Naive thymus-derived CD4-positive, alpha-beta T cell (primary cell): ENCODE measurements at regions of chr3 and their contacts with region 1.

Region 1: DNA sequence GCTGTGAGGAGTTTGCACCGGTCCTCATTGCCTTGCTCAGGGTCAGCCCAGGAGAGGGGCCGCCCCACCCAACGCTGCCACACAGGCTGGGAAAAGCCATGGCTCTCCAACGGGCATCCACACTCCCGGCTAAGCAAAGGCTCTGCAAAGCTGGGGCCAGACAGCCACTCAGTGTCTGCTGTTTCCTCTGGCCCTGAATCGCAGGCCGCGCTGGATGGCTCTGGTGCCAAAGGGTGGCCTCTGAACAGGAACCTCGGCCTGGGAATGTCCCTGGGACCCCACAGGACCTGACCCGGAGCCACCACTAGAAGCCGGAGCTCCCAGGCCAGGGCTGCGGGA is 42.9 kb downstream of the RPN1 start:
- DNase-seq: no peak
- ATAC-seq: no peak
- H3K4me3 ChIP-seq: peak overlapping the region; percentile 64
- H3K4me3 Mint-ChIP-seq: peak overlapping the region in 4 of 10 donors; percentile 9 to 54 (median 43)
- H3K27ac ChIP-seq: no peak overlapping the region
- H3K27ac Mint-ChIP-seq: no peak overlapping the region
- H3K4me1 ChIP-seq: peaks cover 0 to 3% of the 10 kb centered on the region in 2 donors
- H3K4me1 Mint-ChIP-seq: peaks cover 0 to 5% (median 0%) of the 10 kb centered on the region in 7 donors
- H3K27me3 ChIP-seq: no peaks in the 10 kb centered on the region
- H3K27me3 Mint-ChIP-seq: peaks cover 0 to 17% (median 5%) of the 10 kb centered on the region in 5 donors

Region 2: GRCh38 chr3:127690823-127691452 is 916.7 kb before region 1 on chr3:
- CTCF ChIA-PET with region 1: no interaction called
- POLR2A ChIA-PET with region 1: no interaction called
- intact Hi-C with region 1: no loop called
- DNase-seq: no peak
- ATAC-seq: peak; percentile 65
- H3K4me3 ChIP-seq: no peak overlapping the region
- H3K4me3 Mint-ChIP-seq: no peak overlapping the region
- H3K27ac ChIP-seq: no peak overlapping the region
- H3K27ac Mint-ChIP-seq: no peak overlapping the region
- H3K4me1 ChIP-seq: no peaks in the 10 kb centered on the region
- H3K4me1 Mint-ChIP-seq: peaks cover 0 to 2% (median 0%) of the 10 kb centered on the region in 7 donors
- H3K27me3 ChIP-seq: no peaks in the 10 kb centered on the region
- H3K27me3 Mint-ChIP-seq: no peaks in the 10 kb centered on the region

Region 3: DNA sequence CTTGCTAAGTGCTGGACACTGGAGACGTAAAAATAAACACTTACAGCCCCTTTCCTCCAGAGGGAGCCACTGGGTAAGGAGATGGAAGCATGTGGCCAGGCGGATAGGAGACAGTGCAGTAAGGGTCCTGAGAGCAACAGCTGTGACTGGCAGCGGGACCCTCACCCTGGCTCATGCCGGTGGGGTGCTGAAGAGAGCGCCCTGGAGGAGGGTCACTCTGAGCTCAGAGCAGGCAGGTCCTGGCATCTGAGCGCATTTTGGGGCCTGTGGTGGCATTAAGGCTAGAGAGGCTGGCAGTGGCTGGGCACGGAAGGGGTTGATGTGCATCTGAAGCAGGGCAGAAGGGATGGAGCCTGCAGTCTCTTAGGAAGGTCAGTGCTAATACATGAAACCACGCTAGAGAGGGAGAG is 539.5 kb before region 1 on chr3:
- CTCF ChIA-PET with region 1: no interaction called
- POLR2A ChIA-PET with region 1: no interaction called
- intact Hi-C with region 1: loop called in 1 of 2 experiments (anchors 1 kb)
- DNase-seq: peak in 7 of 9 donors; percentile 16 to 48 (median 40)
- ATAC-seq: peak; percentile 74
- H3K4me3 ChIP-seq: no peak overlapping the region
- H3K4me3 Mint-ChIP-seq: no peak overlapping the region
- H3K27ac ChIP-seq: no peak overlapping the region
- H3K27ac Mint-ChIP-seq: peak overlapping the region in 6 of 9 donors; percentile 19 to 82 (median 60)
- H3K4me1 ChIP-seq: no peaks in the 10 kb centered on the region
- H3K4me1 Mint-ChIP-seq: peaks cover 0 to 5% (median 0%) of the 10 kb centered on the region in 7 donors
- H3K27me3 ChIP-seq: no peaks in the 10 kb centered on the region
- H3K27me3 Mint-ChIP-seq: no peaks in the 10 kb centered on the region

Region 4: DNA sequence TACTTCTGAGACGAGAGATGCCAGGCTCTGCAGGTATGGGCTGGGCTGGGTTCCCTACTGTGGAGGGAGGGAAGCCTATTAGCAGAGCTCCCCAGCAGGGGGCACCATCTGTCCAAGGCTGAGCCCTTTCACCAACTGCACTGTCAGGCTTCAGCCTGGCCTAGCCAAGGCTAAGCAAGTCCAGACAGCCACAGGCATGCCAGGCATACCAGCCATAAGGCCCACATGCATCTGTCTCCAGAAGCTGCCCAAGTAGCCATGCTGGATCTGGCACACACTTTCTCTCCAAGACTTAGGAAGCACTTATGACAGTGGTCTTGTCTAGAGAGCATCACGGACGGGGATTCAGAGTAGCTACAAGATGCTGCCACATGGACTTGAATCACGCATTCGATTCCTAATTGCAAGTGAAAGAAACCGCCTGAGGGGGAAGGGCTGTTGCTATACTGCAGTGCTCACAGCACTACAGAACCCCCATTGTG is 512.4 kb before region 1 on chr3:
- CTCF ChIA-PET with region 1: interaction called, 6 read pairs
- POLR2A ChIA-PET with region 1: no interaction called
- intact Hi-C with region 1: loop called (anchors 1 kb)
- DNase-seq: peak; percentile 51 to 79 (median 73)
- ATAC-seq: peak; percentile 99
- H3K4me3 ChIP-seq: no peak overlapping the region
- H3K4me3 Mint-ChIP-seq: no peak overlapping the region
- H3K27ac ChIP-seq: no peak overlapping the region
- H3K27ac Mint-ChIP-seq: peak overlapping the region in 4 of 9 donors; percentile 16 to 68 (median 36)
- H3K4me1 ChIP-seq: no peaks in the 10 kb centered on the region
- H3K4me1 Mint-ChIP-seq: peaks cover 1 to 18% (median 6%) of the 10 kb centered on the region in 7 donors
- H3K27me3 ChIP-seq: no peaks in the 10 kb centered on the region
- H3K27me3 Mint-ChIP-seq: no peaks in the 10 kb centered on the region

Region 5: DNA sequence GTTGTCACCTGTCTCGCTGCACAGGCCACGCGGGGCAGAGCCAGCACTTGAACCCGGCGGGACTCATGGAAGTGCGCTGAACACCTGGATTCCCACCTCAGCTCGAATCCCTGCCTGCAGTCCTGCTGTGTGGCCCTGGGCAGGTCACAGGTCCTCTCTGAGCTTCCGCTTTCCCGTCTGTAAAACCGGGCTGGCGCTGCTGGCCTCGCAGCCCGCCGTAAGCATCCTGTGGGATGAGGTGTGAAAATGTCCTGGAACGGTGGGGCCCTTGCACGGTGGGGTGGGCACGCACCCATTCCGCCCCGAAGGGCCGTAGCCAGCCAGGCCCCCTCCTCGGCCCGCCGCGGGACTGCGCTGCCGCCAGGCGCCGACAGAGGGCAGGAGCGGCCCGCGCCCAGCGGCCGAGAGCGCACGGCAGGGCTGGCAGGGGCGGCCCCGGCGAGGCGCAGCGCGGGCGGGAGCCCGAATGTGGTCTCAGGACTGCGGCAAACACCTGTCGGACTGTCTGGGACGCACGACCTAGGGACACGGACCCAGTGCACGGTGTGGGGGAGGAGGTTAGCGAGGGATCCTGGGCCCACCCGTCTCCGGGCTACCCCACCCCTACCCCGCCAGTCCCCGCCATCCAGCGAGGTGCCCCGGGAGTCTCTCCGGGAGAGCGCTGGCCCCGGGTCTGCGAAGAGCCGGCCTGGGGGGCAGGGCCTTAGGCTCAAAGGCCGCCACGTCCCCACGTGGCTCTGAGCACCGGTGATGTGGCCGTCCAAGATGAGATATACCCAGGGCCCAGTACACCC is 181.4 kb before region 1 on chr3:
- CTCF ChIA-PET with region 1: interaction called, 17 read pairs
- POLR2A ChIA-PET with region 1: no interaction called
- intact Hi-C with region 1: loop called in 1 of 2 experiments (anchors 1 kb)
- DNase-seq: peak; percentile 23 to 81 (median 61)
- ATAC-seq: peak; percentile 93
- H3K4me3 ChIP-seq: no peak overlapping the region
- H3K4me3 Mint-ChIP-seq: peak overlapping the region in 1 of 10 donors; percentile 19
- H3K27ac ChIP-seq: no peak overlapping the region
- H3K27ac Mint-ChIP-seq: no peak overlapping the region
- H3K4me1 ChIP-seq: no peaks in the 10 kb centered on the region
- H3K4me1 Mint-ChIP-seq: peaks cover 0 to 4% (median 0%) of the 10 kb centered on the region in 7 donors
- H3K27me3 ChIP-seq: no peaks in the 10 kb centered on the region
- H3K27me3 Mint-ChIP-seq: peaks cover 9 to 35% (median 22%) of the 10 kb centered on the region in 5 donors

Region 6: GRCh38 chr3:128549283-128550112 is 58.2 kb before region 1 on chr3:
- CTCF ChIA-PET with region 1: no interaction called
- POLR2A ChIA-PET with region 1: no interaction called
- intact Hi-C with region 1: no loop called
- DNase-seq: no peak
- ATAC-seq: no peak
- H3K4me3 ChIP-seq: no peak overlapping the region
- H3K4me3 Mint-ChIP-seq: no peak overlapping the region
- H3K27ac ChIP-seq: no peak overlapping the region
- H3K27ac Mint-ChIP-seq: no peak overlapping the region
- H3K4me1 ChIP-seq: no peaks in the 10 kb centered on the region
- H3K4me1 Mint-ChIP-seq: peaks cover 0 to 8% (median 3%) of the 10 kb centered on the region in 7 donors
- H3K27me3 ChIP-seq: no peaks in the 10 kb centered on the region
- H3K27me3 Mint-ChIP-seq: peaks cover 24 to 47% (median 39%) of the 10 kb centered on the region in 5 donors

Region 7: GRCh38 chr3:128572644-128573105 is 35.0 kb before region 1 on chr3:
- CTCF ChIA-PET with region 1: no interaction called
- POLR2A ChIA-PET with region 1: no interaction called
- intact Hi-C with region 1: loop called in 1 of 2 experiments (anchors 5 kb)
- DNase-seq: peak in 2 of 9 donors; percentile 9 to 34
- ATAC-seq: peak; percentile 53
- H3K4me3 ChIP-seq: no peak overlapping the region
- H3K4me3 Mint-ChIP-seq: no peak overlapping the region
- H3K27ac ChIP-seq: no peak overlapping the region
- H3K27ac Mint-ChIP-seq: peak overlapping the region in 1 of 9 donors; percentile 32
- H3K4me1 ChIP-seq: peaks cover 0 to 13% of the 10 kb centered on the region in 2 donors
- H3K4me1 Mint-ChIP-seq: peaks cover 0 to 16% (median 12%) of the 10 kb centered on the region in 7 donors
- H3K27me3 ChIP-seq: no peaks in the 10 kb centered on the region
- H3K27me3 Mint-ChIP-seq: peaks cover 8 to 37% (median 28%) of the 10 kb centered on the region in 5 donors